HepG2 (cell line): ENCODE measurements at regions of chr6 and their contacts with region 1.

Region 1: DNA sequence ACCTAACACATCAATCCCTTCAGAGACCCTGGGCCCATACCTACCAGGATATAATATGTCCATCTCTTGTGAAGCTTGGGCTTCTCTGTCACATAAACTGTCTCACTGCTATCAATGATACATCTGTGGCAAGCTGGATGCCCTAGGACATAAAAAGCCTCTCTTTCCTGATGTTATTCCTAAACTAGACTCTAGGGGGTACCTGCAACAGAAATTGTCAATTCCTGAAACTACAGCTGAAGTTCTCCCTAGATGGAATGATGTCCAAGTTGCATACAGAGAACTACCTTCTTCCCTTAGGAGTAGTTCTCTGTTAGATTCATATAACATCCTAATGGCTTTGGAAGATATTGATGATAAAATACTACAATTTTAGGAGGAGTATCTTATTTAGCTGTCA is 35.8 kb downstream of the TBX18 start:
- DNase-seq: peak; percentile 5
- ATAC-seq: peak; percentile 69
- H3K4me3 ChIP-seq: no peak overlapping the region
- H3K27ac ChIP-seq: no peak overlapping the region
- H3K4me1 ChIP-seq: no peaks in the 10 kb centered on the region
- H3K27me3 ChIP-seq: no peaks in the 10 kb centered on the region
- CTCF ChIP-seq: peak; percentile 34
- EP300 ChIP-seq: no peak
- POLR2A ChIP-seq: no peak
- RAD21 ChIP-seq: no peak

Region 2: GRCh38 chr6:84774157-84774984 is 45.8 kb after region 1 on chr6:
- CTCF ChIA-PET with region 1: no interaction called
- POLR2A ChIA-PET with region 1: no interaction called
- in situ Hi-C with region 1: no loop called
- intact Hi-C with region 1: loop called (anchors 2 kb)
- DNase-seq: no peak
- ATAC-seq: peak; percentile 83
- H3K4me3 ChIP-seq: no peak overlapping the region
- H3K27ac ChIP-seq: no peak overlapping the region
- H3K4me1 ChIP-seq: no peaks in the 10 kb centered on the region
- H3K27me3 ChIP-seq: peaks cover 0 to under 1% of the 10 kb centered on the region in 2 experiments; a peak in 1 of 5 replicates
- CTCF ChIP-seq: peak; percentile 22; the same call in 1 of the 2 replicates
- EP300 ChIP-seq: no peak
- POLR2A ChIP-seq: no peak
- RAD21 ChIP-seq: no peak